PC-3 (cell line): ENCODE measurements at regions of chr10 and their contacts with region 1.

Region 1: GRCh38 chr10:87861953-87862678 is 1.2 kb downstream of the KLLN start:
- DNase-seq: peak; percentile 91
- ATAC-seq: peak; percentile 54
- H3K4me3 ChIP-seq: peak overlapping the region; percentile 94
- H3K27ac ChIP-seq: peak overlapping the region; percentile 97
- H3K4me1 ChIP-seq: peaks cover 16% of the 10 kb centered on the region; the same call in 1 of the 2 replicates
- H3K27me3 ChIP-seq: no peaks in the 10 kb centered on the region
- CTCF ChIP-seq: no peak

Region 2: DNA sequence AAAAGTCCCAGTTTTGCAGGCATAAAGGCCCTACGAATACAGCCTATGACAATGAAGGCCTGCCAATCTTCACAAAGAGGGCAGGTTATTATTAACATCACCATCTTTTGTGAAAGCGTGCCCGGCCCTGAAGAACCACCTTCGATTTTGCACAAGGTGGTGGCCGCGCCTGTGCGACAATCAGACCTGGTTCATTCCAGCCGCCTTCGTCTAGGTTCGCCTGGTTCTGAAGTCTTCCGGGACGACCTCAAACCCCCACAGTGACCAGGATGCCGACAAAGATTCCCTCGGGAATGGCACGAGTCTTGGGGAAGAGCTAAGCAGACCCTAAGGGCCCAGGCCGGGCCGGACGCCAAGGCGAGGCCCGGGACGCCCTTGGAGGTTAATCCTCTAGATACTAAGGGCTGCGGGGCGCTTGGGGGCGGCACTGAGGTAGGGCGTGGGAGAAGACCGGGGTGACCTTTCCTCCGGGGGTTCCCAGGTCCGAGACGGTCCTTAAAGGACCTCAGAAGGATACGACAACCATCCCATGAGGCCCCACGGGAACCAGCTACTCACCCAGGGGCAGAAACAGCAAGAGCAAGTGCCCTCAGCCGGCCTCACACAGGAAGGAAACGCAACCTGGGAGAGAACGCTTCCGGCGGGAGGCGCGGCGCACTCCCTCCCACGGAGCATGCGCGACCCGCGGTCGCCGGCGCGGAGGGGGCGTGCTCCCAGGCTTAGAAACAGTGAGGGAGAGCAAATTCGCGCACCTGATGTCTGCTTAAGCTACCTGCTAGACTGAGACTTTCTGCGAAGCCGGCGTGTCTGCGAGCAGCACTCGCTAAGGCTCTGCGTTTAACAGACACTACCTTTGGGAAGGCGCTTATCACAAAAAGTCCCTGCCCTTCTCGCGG is 44.3 kb before region 1 on chr10 and contains the start of gene ATAD1:
- CTCF ChIA-PET with region 1: interaction called, 3 read pairs
- POLR2A ChIA-PET with region 1: interaction called, 4 read pairs
- intact Hi-C with region 1: loop called (anchors 1 kb)
- DNase-seq: peak; percentile 86
- ATAC-seq: peak; percentile 90
- H3K4me3 ChIP-seq: peak within 1 kb of the TSS; percentile 98
- H3K27ac ChIP-seq: peak within 1 kb of the TSS; percentile 82
- H3K4me1 ChIP-seq: peaks cover 26% of the 10 kb centered on the region
- H3K27me3 ChIP-seq: no peaks in the 10 kb centered on the region
- CTCF ChIP-seq: 0 out of 2 replicates have a peak, but pooled peaks have one; percentile 21
- total RNA-seq, gene ATAD1: 14.9 and 15.7 TPM in 2 replicates

Region 3: DNA sequence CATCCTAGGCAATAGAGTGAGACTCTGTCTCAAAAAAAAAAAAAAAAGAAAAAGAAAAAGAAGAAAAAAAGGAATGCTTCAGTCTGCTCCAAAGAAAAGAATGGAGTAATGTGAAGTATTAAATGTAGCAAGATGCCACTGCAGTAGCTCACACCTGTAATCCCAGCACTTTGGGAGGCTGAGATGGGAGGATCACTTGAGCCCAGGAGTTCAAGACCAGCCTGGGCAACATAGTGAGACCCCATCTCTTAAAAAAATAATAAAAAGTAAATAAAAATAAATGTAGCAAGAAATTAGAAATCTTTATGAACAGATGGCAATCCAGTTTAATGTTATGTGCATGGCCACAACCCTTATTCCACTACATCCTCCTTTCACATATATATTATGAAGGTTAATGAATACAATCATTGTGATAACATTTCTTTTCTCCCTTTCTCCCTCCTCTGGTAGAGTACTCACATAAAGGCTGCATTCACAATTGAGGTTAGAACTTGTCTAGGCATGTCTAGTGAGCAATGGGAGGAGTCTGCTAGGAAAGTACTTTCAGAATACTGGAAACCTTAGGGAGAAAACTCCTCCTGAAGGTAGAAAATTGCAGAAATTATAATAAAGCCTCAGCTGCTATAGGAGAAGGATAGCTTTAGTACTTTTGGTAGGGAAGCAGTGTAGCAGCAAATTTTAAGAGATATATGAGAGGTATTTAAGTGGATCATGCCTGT is 19.2 kb before region 1 on chr10:
- CTCF ChIA-PET with region 1: no interaction called
- POLR2A ChIA-PET with region 1: interaction called, 4 read pairs
- intact Hi-C with region 1: loop called (anchors 2 kb)
- DNase-seq: no peak
- ATAC-seq: no peak
- H3K4me3 ChIP-seq: no peak overlapping the region
- H3K27ac ChIP-seq: peak overlapping the region; percentile 98
- H3K4me1 ChIP-seq: peaks cover 51% of the 10 kb centered on the region
- H3K27me3 ChIP-seq: no peaks in the 10 kb centered on the region
- CTCF ChIP-seq: no peak